Transverse colon (tissue), 4 donors: ENCODE measurements at regions of chr19 and their contacts with region 1.

Region 1: DNA sequence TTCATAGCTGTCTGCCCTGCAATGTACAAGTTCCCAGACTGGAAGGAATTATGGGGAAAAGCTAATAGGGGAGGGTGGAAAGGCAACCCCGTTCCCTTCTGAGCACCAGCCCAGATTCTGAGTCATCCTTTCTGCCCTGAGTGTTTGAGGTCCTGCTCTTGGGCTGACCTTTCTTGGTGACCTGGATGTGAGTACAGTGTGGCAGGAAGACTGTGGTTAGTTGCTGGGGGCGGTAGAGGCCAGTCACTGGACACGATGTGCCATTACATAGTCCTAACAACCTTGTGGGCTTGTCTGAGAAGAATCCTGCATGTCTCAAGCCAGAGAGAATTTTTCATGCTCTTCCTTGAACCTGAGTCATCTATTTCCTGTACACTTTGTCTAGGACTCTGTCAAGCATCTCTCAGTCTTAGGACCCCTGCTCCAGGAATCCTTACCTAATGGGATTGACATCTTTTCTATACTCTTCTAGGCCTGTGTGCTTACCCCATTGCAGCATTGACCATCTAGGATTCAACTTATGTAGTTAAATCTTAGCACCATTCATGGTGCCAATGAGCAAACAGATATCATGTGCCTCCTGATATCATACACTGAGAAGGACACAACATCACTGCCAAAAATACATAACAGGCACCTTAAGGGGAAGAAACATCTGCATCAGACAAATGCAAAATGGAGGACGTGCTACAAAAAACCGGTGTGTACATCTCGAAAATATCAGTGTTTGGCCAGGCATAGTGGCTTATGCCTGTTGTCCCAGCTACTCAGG is 8.1 kb upstream of the ANGPTL4 start:
- DNase-seq: no peak
- H3K4me3 ChIP-seq: no peak overlapping the region
- H3K27ac ChIP-seq: peak overlapping the region in 2 of 4 donors; percentile 5 to 26
- H3K4me1 ChIP-seq: peaks cover 0 to 19% (median 5%) of the 10 kb centered on the region in 4 donors
- H3K27me3 ChIP-seq: peaks cover 25% of the 10 kb centered on the region
- CTCF ChIP-seq: no peak
- EP300 ChIP-seq: no peak
- POLR2A ChIP-seq: no peak

Region 2: GRCh38 chr19:8396563-8397203 is 40.9 kb after region 1 on chr19:
- in situ Hi-C with region 1: loop called in 1 of 4 experiments (anchors 10 kb)
- intact Hi-C with region 1: loop called (anchors 2 kb)
- DNase-seq: peak; percentile 65
- H3K4me3 ChIP-seq: no peak overlapping the region
- H3K27ac ChIP-seq: peak overlapping the region in 1 of 4 donors; percentile 8
- H3K4me1 ChIP-seq: peaks cover 12 to 46% (median 21%) of the 10 kb centered on the region in 4 donors
- H3K27me3 ChIP-seq: no peaks in the 10 kb centered on the region
- CTCF ChIP-seq: peak; percentile 28 to 54 (median 52)
- EP300 ChIP-seq: no peak
- POLR2A ChIP-seq: no peak

Region 3: GRCh38 chr19:8404391-8405151 is 48.8 kb after region 1 on chr19:
- in situ Hi-C with region 1: loop called in 1 of 4 experiments (anchors 10 kb)
- intact Hi-C with region 1: no loop called
- DNase-seq: no peak
- H3K4me3 ChIP-seq: no peak overlapping the region
- H3K27ac ChIP-seq: no peak overlapping the region
- H3K4me1 ChIP-seq: no peaks in the 10 kb centered on the region
- H3K27me3 ChIP-seq: no peaks in the 10 kb centered on the region
- CTCF ChIP-seq: no peak
- EP300 ChIP-seq: no peak
- POLR2A ChIP-seq: no peak

Region 4: DNA sequence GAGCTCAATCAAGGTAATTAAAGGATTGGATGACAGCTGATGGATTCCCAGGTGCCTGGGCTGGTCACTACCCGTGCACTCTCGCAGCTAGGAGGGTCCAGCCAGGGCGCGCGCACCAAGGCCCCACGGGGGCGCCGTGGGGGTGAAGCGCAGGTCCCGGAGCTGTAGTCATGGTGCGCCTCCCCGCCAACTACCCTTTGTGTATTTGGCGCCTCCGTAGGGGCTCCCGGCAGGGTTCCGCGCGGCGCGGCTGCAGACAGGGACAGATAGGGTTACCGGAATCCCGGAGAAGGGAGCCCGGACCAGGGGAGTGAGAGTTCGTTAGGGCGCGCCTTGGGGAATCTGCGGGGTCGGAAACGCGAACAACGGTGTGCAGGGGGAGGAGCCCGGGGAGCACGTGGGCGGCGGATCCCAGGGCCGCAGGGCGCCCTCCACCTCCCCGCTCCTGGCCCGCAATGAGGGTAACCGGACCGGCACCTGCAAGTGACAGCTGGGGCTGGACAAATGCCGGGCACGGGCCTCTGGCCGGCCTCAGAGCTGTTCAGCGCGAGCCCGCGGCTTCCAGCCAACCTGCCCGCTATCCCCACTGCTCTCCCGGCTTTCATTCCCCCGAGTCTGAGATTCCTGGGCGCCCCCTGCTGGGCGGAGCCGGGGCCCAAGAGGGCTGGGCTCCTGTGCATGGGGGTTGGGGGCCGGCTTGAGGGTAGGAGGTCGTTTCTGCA is 150.0 kb after region 1 on chr19:
- in situ Hi-C with region 1: loop called in 2 of 4 experiments (anchors 10 kb)
- intact Hi-C with region 1: loop called (anchors 10 kb)
- DNase-seq: peak; percentile 82
- H3K4me3 ChIP-seq: peak overlapping the region; percentile 10 to 59 (median 36)
- H3K27ac ChIP-seq: peak overlapping the region in 2 of 4 donors; percentile 2 to 8
- H3K4me1 ChIP-seq: peaks cover 5 to 13% (median 12%) of the 10 kb centered on the region in 4 donors
- H3K27me3 ChIP-seq: no peaks in the 10 kb centered on the region
- CTCF ChIP-seq: peak; percentile 81 to 88 (median 83)
- EP300 ChIP-seq: no peak
- POLR2A ChIP-seq: no peak

Region 5: GRCh38 chr19:8840708-8841107 is 484.9 kb after region 1 on chr19:
- in situ Hi-C with region 1: no loop called
- intact Hi-C with region 1: no loop called
- DNase-seq: no peak
- H3K4me3 ChIP-seq: no peak overlapping the region
- H3K27ac ChIP-seq: no peak overlapping the region
- H3K4me1 ChIP-seq: no peaks in the 10 kb centered on the region
- H3K27me3 ChIP-seq: peaks cover 3% of the 10 kb centered on the region
- CTCF ChIP-seq: no peak
- EP300 ChIP-seq: no peak
- POLR2A ChIP-seq: no peak